H1 (cell line): ENCODE measurements at regions of chr3 and their contacts with region 1.

Region 1: DNA sequence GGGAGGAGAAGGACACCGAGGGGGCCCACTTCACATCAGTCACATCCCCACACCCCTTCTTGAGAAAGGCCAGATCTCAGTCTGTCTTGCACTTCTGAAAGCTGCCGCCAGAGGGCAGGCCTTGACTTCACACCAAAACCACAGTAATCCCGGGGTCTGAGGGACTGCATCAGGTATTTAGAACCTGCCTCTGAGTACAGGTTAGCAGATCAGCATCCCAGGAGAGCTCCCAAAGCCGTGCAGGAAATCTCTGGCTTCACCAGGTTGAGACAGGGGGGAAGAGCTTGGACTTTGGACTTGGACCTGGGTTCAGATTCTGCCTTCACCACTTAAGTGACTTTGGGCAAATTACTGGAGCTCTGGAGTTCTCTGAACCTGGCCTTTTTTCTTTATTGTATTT is 50.3 kb downstream of the LHFPL4 start:
- DNase-seq: peak; percentile 83 to 97
- H3K4me3 ChIP-seq: no peak overlapping the region
- H3K27ac ChIP-seq: no peak overlapping the region
- H3K4me1 ChIP-seq: peaks cover 0 to 6% (median 3%) of the 10 kb centered on the region in 4 experiments; a peak in 4 of 7 replicates
- H3K27me3 ChIP-seq: peaks cover 0 to 10% (median 5%) of the 10 kb centered on the region in 4 experiments; a peak in 4 of 7 replicates
- CTCF ChIP-seq: peak in 2 of 3 experiments; percentile 91 to 96; a peak in 3 of 4 replicates
- EP300 ChIP-seq: no peak
- POLR2A ChIP-seq: no peak
- RAD21 ChIP-seq: peak; percentile 97 to 99

Region 2: DNA sequence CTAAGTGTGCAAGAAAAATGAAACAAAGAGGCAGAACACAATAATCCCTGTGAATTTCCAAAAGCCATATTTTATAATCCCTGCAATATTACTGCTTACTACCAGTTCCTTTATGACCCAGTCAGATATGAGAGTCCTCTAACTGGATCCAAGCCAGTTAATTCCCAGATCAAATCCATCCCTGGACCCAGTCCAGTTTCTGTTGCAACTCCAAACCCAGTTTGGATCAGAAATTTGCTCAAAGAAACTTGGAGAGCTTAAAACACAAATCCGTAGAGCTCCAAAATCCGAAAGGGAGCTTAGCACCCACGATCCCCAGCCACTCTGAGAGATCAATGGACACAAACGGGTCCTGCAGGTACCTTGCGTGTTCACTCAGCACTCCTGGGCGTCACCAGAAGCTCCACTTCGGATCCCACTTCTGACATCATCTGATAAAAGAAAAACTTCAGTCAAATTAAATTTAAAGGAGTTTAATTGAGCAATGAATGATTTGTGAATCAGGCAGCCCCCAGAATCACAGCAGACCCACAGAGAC is 173.0 kb before region 1 on chr3:
- CTCF ChIA-PET with region 1: no interaction called
- POLR2A ChIA-PET with region 1: no interaction called
- DNase-seq: no peak
- H3K4me3 ChIP-seq: no peak overlapping the region
- H3K27ac ChIP-seq: no peak overlapping the region
- H3K4me1 ChIP-seq: peaks cover 0 to 2% (median 0%) of the 10 kb centered on the region in 4 experiments; a peak in 1 of 7 replicates
- H3K27me3 ChIP-seq: no peaks in the 10 kb centered on the region
- CTCF ChIP-seq: no peak
- EP300 ChIP-seq: no peak
- POLR2A ChIP-seq: no peak
- RAD21 ChIP-seq: no peak

Region 3: DNA sequence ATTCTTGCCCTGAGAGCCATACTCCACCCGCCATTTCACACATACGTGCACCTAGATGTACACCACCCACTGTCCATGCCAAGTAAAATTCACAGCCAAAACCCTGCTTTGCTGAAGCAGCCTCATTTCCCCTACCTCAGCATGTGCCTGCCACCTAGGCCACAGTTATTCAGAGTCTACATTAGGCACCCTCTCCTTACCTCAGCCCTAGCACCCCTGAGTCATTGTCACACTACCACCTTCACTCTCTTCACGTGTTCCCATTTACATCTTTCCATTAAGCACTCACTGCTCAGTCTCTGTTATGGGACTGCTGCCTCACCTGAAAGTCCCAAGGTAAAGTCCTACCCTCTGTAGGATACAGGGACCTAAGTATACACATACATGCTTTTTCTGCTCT is 35.8 kb before region 1 on chr3:
- CTCF ChIA-PET with region 1: no interaction called
- POLR2A ChIA-PET with region 1: no interaction called
- DNase-seq: no peak
- H3K4me3 ChIP-seq: no peak overlapping the region
- H3K27ac ChIP-seq: no peak overlapping the region
- H3K4me1 ChIP-seq: no peaks in the 10 kb centered on the region
- H3K27me3 ChIP-seq: no peaks in the 10 kb centered on the region
- CTCF ChIP-seq: no peak
- EP300 ChIP-seq: no peak
- POLR2A ChIP-seq: no peak; a peak in 1 of 3 replicates
- RAD21 ChIP-seq: no peak

Region 4: GRCh38 chr3:9491506-9491905 is 11.8 kb before region 1 on chr3:
- CTCF ChIA-PET with region 1: interaction called, 12 read pairs
- POLR2A ChIA-PET with region 1: interaction called, 4 read pairs
- DNase-seq: no peak
- H3K4me3 ChIP-seq: no peak overlapping the region
- H3K27ac ChIP-seq: no peak overlapping the region
- H3K4me1 ChIP-seq: no peaks in the 10 kb centered on the region
- H3K27me3 ChIP-seq: peaks cover 0 to 17% (median 11%) of the 10 kb centered on the region in 4 experiments; a peak in 5 of 7 replicates
- CTCF ChIP-seq: no peak
- EP300 ChIP-seq: no peak
- POLR2A ChIP-seq: no peak
- RAD21 ChIP-seq: no peak

Region 5: GRCh38 chr3:9582332-9582731 is 79.0 kb after region 1 on chr3:
- CTCF ChIA-PET with region 1: interaction called, 18 read pairs
- POLR2A ChIA-PET with region 1: no interaction called
- DNase-seq: no peak
- H3K4me3 ChIP-seq: no peak overlapping the region; a peak in 1 of 8 replicates
- H3K27ac ChIP-seq: no peak overlapping the region
- H3K4me1 ChIP-seq: peaks cover 2 to 14% (median 6%) of the 10 kb centered on the region in 4 experiments; a peak in 4 of 7 replicates
- H3K27me3 ChIP-seq: no peaks in the 10 kb centered on the region
- CTCF ChIP-seq: no peak
- EP300 ChIP-seq: no peak
- POLR2A ChIP-seq: no peak
- RAD21 ChIP-seq: no peak

Region 6: GRCh38 chr3:9659849-9660248 is 156.6 kb after region 1 on chr3:
- CTCF ChIA-PET with region 1: interaction called, 43 read pairs
- POLR2A ChIA-PET with region 1: no interaction called
- DNase-seq: no peak
- H3K4me3 ChIP-seq: no peak overlapping the region
- H3K27ac ChIP-seq: no peak overlapping the region
- H3K4me1 ChIP-seq: no peaks in the 10 kb centered on the region
- H3K27me3 ChIP-seq: no peaks in the 10 kb centered on the region
- CTCF ChIP-seq: no peak
- EP300 ChIP-seq: no peak
- POLR2A ChIP-seq: no peak
- RAD21 ChIP-seq: no peak

Region 7: GRCh38 chr3:9698293-9698692 is 195.0 kb after region 1 on chr3:
- CTCF ChIA-PET with region 1: interaction called, 48 read pairs
- POLR2A ChIA-PET with region 1: no interaction called
- DNase-seq: no peak
- H3K4me3 ChIP-seq: no peak overlapping the region
- H3K27ac ChIP-seq: no peak overlapping the region
- H3K4me1 ChIP-seq: no peaks in the 10 kb centered on the region
- H3K27me3 ChIP-seq: peaks cover 0 to 5% (median 2%) of the 10 kb centered on the region in 4 experiments; a peak in 5 of 7 replicates
- CTCF ChIP-seq: no peak
- EP300 ChIP-seq: no peak
- POLR2A ChIP-seq: no peak
- RAD21 ChIP-seq: no peak